B cell (primary cell): ENCODE measurements at regions of chr15 and their contacts with region 1.

Region 1: GRCh38 chr15:48360841-48361240 is 29.6 kb downstream of the DUT start:
- DNase-seq: no peak
- ATAC-seq: no peak
- H3K4me3 ChIP-seq: no peak overlapping the region
- H3K4me3 Mint-ChIP-seq: no peak overlapping the region
- H3K27ac ChIP-seq: no peak overlapping the region
- H3K27ac Mint-ChIP-seq: no peak overlapping the region
- H3K4me1 ChIP-seq: no peaks in the 10 kb centered on the region
- H3K4me1 Mint-ChIP-seq: peaks cover 8% of the 10 kb centered on the region
- H3K27me3 ChIP-seq: no peaks in the 10 kb centered on the region
- H3K27me3 Mint-ChIP-seq: no peaks in the 10 kb centered on the region
- CTCF ChIP-seq: no peak

Region 2: GRCh38 chr15:49421991-49422390 is 1061.2 kb after region 1 on chr15:
- CTCF ChIA-PET with region 1: interaction called, 5 read pairs
- POLR2A ChIA-PET with region 1: no interaction called
- intact Hi-C with region 1: loop called (anchors 5 kb)
- DNase-seq: peak; percentile 63
- ATAC-seq: peak; percentile 24
- H3K4me3 ChIP-seq: peak overlapping the region in 1 of 5 experiments; percentile 8
- H3K4me3 Mint-ChIP-seq: peak overlapping the region; percentile 33
- H3K27ac ChIP-seq: no peak overlapping the region
- H3K27ac Mint-ChIP-seq: peak overlapping the region; percentile 46
- H3K4me1 ChIP-seq: no peaks in the 10 kb centered on the region
- H3K4me1 Mint-ChIP-seq: peaks cover 3% of the 10 kb centered on the region
- H3K27me3 ChIP-seq: no peaks in the 10 kb centered on the region
- H3K27me3 Mint-ChIP-seq: peaks cover 4% of the 10 kb centered on the region
- CTCF ChIP-seq: peak; percentile 73

Region 3: GRCh38 chr15:49741712-49742111 is 1380.9 kb after region 1 on chr15:
- CTCF ChIA-PET with region 1: no interaction called
- POLR2A ChIA-PET with region 1: no interaction called
- intact Hi-C with region 1: no loop called
- DNase-seq: no peak
- ATAC-seq: no peak
- H3K4me3 ChIP-seq: no peak overlapping the region
- H3K4me3 Mint-ChIP-seq: no peak overlapping the region
- H3K27ac ChIP-seq: no peak overlapping the region
- H3K27ac Mint-ChIP-seq: no peak overlapping the region
- H3K4me1 ChIP-seq: no peaks in the 10 kb centered on the region
- H3K4me1 Mint-ChIP-seq: no peaks in the 10 kb centered on the region
- H3K27me3 ChIP-seq: no peaks in the 10 kb centered on the region
- H3K27me3 Mint-ChIP-seq: no peaks in the 10 kb centered on the region
- CTCF ChIP-seq: no peak